Right ventricle myocardium inferior (tissue), 1 donor: ENCODE measurements at regions of chr1 and their contacts with region 1.

Region 1: GRCh38 chr1:114282751-114283403 is 129.2 kb upstream of the SYT6 start:
- DNase-seq: peak; percentile 91
- ATAC-seq: peak; percentile 97

Region 2: GRCh38 chr1:113630068-113630975 is 652.6 kb before region 1 on chr1:
- intact Hi-C with region 1: no loop called
- DNase-seq: no peak
- ATAC-seq: no peak

Region 3: GRCh38 chr1:113830039-113830438 is 452.8 kb before region 1 on chr1:
- intact Hi-C with region 1: loop called (anchors 5 kb)
- DNase-seq: no peak
- ATAC-seq: no peak

Region 4: GRCh38 chr1:114033216-114033706 is 249.6 kb before region 1 on chr1:
- intact Hi-C with region 1: loop called (anchors 10 kb)
- DNase-seq: no peak
- ATAC-seq: no peak

Region 5: GRCh38 chr1:114224196-114224907 is 58.5 kb before region 1 on chr1:
- intact Hi-C with region 1: no loop called
- DNase-seq: no peak
- ATAC-seq: peak; percentile 56